Endothelial cell of umbilical vein (primary cell): ENCODE measurements at regions of chr4 and their contacts with region 1.

Region 1: GRCh38 chr4:154506253-154506652 is 14.7 kb upstream of the DCHS2 start:
- DNase-seq: peak; percentile 24
- H3K4me3 ChIP-seq: no peak overlapping the region
- H3K27ac ChIP-seq: no peak overlapping the region
- H3K4me1 ChIP-seq: no peaks in the 10 kb centered on the region
- H3K27me3 ChIP-seq: peaks cover 0 to 4% of the 10 kb centered on the region in 2 experiments
- CTCF ChIP-seq: peak; percentile 11 to 31
- POLR2A ChIP-seq: no peak

Region 2: GRCh38 chr4:153785910-153786721 is 720.1 kb before region 1 on chr4:
- CTCF ChIA-PET with region 1: interaction called, 77 read pairs
- POLR2A ChIA-PET with region 1: no interaction called
- dilution Hi-C with region 1: no loop called
- intact Hi-C with region 1: no loop called
- DNase-seq: peak; percentile 20
- H3K4me3 ChIP-seq: no peak overlapping the region
- H3K27ac ChIP-seq: no peak overlapping the region
- H3K4me1 ChIP-seq: peaks cover under 1% of the 10 kb centered on the region
- H3K27me3 ChIP-seq: peaks cover 47 to 58% of the 10 kb centered on the region in 2 experiments
- CTCF ChIP-seq: peak; percentile 7 to 11
- POLR2A ChIP-seq: no peak

Region 3: DNA sequence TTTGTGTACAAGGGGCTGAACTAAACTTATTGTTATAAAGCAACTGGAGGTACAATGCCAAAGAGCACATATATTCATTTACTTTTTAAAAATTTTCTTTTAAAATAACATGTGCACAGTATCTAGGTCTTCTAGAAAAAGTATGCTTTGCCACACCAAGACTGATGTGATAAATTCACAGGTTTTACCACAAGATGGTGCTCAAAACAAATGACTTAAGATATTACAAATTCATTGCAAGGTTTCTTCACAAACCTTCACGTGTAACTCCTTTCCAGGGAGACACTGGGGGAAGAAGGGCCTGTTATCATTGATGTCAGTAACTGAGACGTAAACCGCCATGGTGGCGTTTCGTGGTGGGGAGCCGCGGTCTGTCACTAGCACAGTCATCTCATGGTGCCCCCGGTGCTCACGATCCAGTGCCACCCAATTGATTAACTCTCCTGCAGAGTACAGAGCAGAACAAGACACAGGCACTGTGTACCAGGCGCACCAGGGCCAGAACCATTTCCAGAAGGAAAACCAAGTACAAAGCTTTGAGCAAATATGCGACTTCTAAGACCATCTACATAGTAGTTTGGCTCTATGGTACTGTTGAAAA is 176.9 kb before region 1 on chr4:
- CTCF ChIA-PET with region 1: no interaction called
- POLR2A ChIA-PET with region 1: no interaction called
- dilution Hi-C with region 1: no loop called
- intact Hi-C with region 1: loop called (anchors 1 kb)
- DNase-seq: no peak
- H3K4me3 ChIP-seq: no peak overlapping the region
- H3K27ac ChIP-seq: no peak overlapping the region
- H3K4me1 ChIP-seq: no peaks in the 10 kb centered on the region
- H3K27me3 ChIP-seq: no peaks in the 10 kb centered on the region
- CTCF ChIP-seq: no peak
- POLR2A ChIP-seq: no peak

Region 4: DNA sequence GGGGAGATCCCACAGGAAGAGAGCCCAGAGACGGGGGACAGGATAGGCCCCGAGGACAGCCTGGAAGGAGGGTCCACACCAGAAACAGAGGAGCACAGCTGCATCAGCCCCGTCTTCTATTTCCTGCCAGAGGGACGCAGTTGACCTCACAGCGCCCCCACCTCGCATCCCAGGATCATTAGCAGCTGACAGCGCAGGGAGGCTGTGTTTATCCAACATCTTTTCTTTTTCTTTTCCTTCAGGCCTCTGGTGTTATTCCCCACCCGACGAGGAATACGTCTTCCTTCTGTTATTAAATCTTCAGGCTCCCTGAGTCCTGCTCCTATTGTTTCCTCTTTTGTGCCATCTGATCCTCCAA is 90.1 kb before region 1 on chr4:
- CTCF ChIA-PET with region 1: no interaction called
- POLR2A ChIA-PET with region 1: no interaction called
- dilution Hi-C with region 1: no loop called
- intact Hi-C with region 1: no loop called
- DNase-seq: no peak
- H3K4me3 ChIP-seq: peak overlapping the region in 2 of 3 experiments; percentile 31 to 47
- H3K27ac ChIP-seq: no peak overlapping the region
- H3K4me1 ChIP-seq: no peaks in the 10 kb centered on the region
- H3K27me3 ChIP-seq: no peaks in the 10 kb centered on the region
- CTCF ChIP-seq: no peak
- POLR2A ChIP-seq: no peak

Region 5: DNA sequence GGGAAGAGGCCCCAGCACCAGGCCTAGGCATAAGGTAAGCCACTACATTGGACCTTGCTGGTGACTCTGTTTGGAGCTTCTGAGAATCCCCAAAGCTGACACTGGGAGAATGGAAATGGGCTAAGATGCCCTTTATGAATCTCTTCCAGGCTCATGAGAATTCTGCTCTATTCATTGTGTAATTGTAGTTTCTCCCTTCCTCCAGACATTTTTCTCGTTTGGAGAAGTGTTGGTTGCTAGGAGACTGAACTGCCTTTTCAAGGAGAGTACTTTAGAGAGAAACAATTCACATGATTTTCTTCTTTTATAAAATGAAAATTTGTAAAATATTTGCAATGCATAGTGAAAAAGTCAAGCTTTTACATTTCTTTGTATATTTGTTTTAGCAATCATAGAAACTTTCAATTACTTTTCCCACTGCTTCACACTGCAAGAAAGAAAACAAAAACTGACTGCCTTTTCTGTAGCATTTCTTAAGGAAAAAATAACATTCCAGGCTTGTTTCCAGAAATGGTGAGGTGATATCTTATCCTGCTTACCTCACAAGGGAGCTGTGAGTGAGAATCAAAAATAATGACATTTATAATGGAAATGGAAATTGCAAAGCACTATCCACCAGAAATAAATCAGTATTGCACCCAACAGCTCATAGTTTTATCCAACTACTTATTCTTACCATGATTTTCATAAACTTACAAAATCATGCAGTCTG is 10.2 kb after region 1 on chr4:
- CTCF ChIA-PET with region 1: interaction called, 10 read pairs
- POLR2A ChIA-PET with region 1: no interaction called
- dilution Hi-C with region 1: no loop called
- intact Hi-C with region 1: no loop called
- DNase-seq: no peak
- H3K4me3 ChIP-seq: no peak overlapping the region
- H3K27ac ChIP-seq: no peak overlapping the region
- H3K4me1 ChIP-seq: no peaks in the 10 kb centered on the region
- H3K27me3 ChIP-seq: no peaks in the 10 kb centered on the region
- CTCF ChIP-seq: no peak
- POLR2A ChIP-seq: no peak